Heart right ventricle (tissue), 16 donors: ENCODE measurements at regions of chr15 and their contacts with region 1.

Region 1: GRCh38 chr15:52103217-52104207 is 9.1 kb downstream of the BCL2L10 start:
- DNase-seq: no peak
- ATAC-seq: peak in 4 of 8 donors; percentile 38 to 80 (median 68)
- H3K4me3 ChIP-seq: no peak overlapping the region
- H3K27ac ChIP-seq: no peak overlapping the region
- H3K4me1 ChIP-seq: peaks cover 0 to 29% (median 0%) of the 10 kb centered on the region in 9 donors
- H3K27me3 ChIP-seq: peaks cover 0 to 6% (median 0%) of the 10 kb centered on the region in 7 donors
- CTCF ChIP-seq: no peak

Region 2: GRCh38 chr15:52154896-52155865 is 51.7 kb after region 1 on chr15:
- intact Hi-C with region 1: loop called in 1 of 10 experiments (anchors 10 kb)
- DNase-seq: no peak
- ATAC-seq: no peak
- H3K4me3 ChIP-seq: no peak overlapping the region
- H3K27ac ChIP-seq: no peak overlapping the region
- H3K4me1 ChIP-seq: peaks cover 0 to 4% (median 0%) of the 10 kb centered on the region in 9 donors
- H3K27me3 ChIP-seq: no peaks in the 10 kb centered on the region
- CTCF ChIP-seq: no peak